ENCODE measurements at regions of chr21 and their contacts with region 1.

Region 1: DNA sequence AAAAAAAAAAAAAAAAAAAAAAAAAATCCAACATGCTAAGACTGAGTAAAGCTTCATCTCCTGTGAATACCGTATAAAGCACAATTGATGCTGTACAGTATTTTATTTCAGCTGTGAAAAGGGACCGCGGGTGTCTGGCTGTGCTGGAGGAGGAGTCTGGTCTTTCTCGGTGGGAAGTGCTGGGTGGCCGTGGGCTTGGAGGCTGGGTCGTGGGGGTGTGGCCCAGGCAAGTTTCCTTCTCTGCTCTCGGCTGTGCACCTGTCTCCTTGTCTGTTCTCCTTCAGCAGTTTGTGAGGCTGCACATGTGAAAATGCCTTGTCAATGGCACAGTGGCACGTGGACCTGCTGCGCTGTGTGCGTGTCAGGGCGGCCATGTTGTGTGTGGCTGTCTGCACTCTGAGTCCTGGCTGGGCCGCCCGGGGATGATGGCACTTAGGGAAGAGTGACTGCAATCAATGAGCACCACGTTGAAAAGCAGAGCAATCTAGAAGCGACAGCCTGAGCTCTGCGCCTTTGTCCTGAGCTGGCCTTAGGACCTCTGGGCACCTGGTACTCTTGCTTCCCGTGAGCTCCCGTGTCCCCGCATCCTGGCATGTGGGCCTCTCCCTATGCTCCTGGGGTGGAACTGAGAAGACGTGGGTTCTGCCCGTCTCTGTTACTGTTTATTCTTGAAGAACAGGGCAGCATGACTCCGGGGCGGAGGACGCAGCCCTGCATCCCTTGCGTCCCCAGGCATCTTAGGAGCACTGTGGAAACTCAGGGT is 14.5 kb downstream of the AGPAT3 start:
- DNase-seq: peak in 1 of 7 donors; percentile 9
- H3K4me3 ChIP-seq: no peak overlapping the region
- H3K27ac ChIP-seq: peak overlapping the region in 2 of 5 donors; percentile 37 to 50
- H3K4me1 ChIP-seq: peaks cover 9 to 19% of the 10 kb centered on the region in 2 donors
- H3K27me3 ChIP-seq: no peaks in the 10 kb centered on the region
- CTCF ChIP-seq: no peak
- POLR2A ChIP-seq: no peak

Region 2: GRCh38 chr21:43913928-43914327 is 34.4 kb after region 1 on chr21:
- intact Hi-C with region 1: loop called in 1 of 2 experiments (anchors 5 kb)
- DNase-seq: peak; percentile 74 to 89 (median 77)
- H3K4me3 ChIP-seq: no peak overlapping the region
- H3K27ac ChIP-seq: peak overlapping the region in 4 of 5 donors; percentile 42 to 59 (median 52)
- H3K4me1 ChIP-seq: peaks cover 0 to 19% of the 10 kb centered on the region in 2 donors
- H3K27me3 ChIP-seq: no peaks in the 10 kb centered on the region
- CTCF ChIP-seq: no peak
- POLR2A ChIP-seq: no peak